GM23248 (cell line): ENCODE measurements at regions of chr20 and their contacts with region 1.

Region 1: DNA sequence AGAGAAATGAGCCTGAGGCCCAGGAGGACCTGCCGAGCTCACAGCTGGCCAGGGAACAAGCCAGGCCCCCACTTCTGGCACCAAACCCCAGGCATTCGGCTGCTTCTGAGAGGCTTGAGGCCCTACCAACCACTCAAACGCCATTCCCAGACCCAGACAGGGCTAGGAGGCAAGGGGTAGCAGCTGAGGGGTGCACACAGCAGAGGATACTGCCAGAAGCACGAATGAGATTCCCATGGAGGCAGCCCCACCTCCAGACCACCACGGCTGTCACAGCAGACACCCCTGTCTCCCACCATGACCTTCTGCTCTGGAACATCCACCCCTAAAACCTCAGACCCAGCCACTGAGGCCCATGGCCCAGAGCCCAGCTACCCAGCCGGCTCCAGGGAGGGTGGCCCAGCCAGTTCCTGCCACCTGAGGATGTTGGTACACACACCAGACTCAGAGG is 36.1 kb downstream of the NTSR1 start:
- DNase-seq: no peak
- H3K4me3 ChIP-seq: no peak overlapping the region
- H3K27ac ChIP-seq: no peak overlapping the region
- H3K4me1 ChIP-seq: peaks cover 12% of the 10 kb centered on the region
- H3K27me3 ChIP-seq: peaks cover 6% of the 10 kb centered on the region; the same call in 1 of the 2 replicates

Region 2: GRCh38 chr20:62237801-62238571 is 506.8 kb before region 1 on chr20 and contains the start of gene OSBPL2:
- in situ Hi-C with region 1: no loop called
- DNase-seq: peak; percentile 99
- H3K4me3 ChIP-seq: peak within 1 kb of the TSS; percentile 82
- H3K27ac ChIP-seq: peak within 1 kb of the TSS; percentile 50
- H3K4me1 ChIP-seq: no peaks in the 10 kb centered on the region
- H3K27me3 ChIP-seq: no peaks in the 10 kb centered on the region
- total RNA-seq, gene OSBPL2: 22.4 and 27.9 TPM in 2 replicates

Region 3: GRCh38 chr20:62368976-62369814 is 375.6 kb before region 1 on chr20:
- in situ Hi-C with region 1: no loop called
- DNase-seq: peak; percentile 71
- H3K4me3 ChIP-seq: peak overlapping the region; percentile 4; the same call in 1 of the 2 replicates
- H3K27ac ChIP-seq: no peak overlapping the region
- H3K4me1 ChIP-seq: peaks cover 21% of the 10 kb centered on the region
- H3K27me3 ChIP-seq: peaks cover 9% of the 10 kb centered on the region; the same call in 1 of the 2 replicates

Region 4: GRCh38 chr20:62697468-62697912 is 47.3 kb before region 1 on chr20:
- in situ Hi-C with region 1: loop called (anchors 5 kb)
- DNase-seq: no peak
- H3K4me3 ChIP-seq: no peak overlapping the region
- H3K27ac ChIP-seq: no peak overlapping the region
- H3K4me1 ChIP-seq: no peaks in the 10 kb centered on the region
- H3K27me3 ChIP-seq: peaks cover 10% of the 10 kb centered on the region; the same call in 1 of the 2 replicates